Activated CD4-positive, alpha-beta T cell treated with anti-CD3 and anti-CD28 coated beads for 36 hours (primary cell): ENCODE measurements at regions of chr2 and their contacts with region 1.

Region 1: GRCh38 chr2:127591221-127591923 is 54.6 kb upstream of the GPR17 start:
- DNase-seq: peak; percentile 84
- ATAC-seq: peak; percentile 97
- H3K4me3 Mint-ChIP-seq: no peak overlapping the region
- H3K27ac Mint-ChIP-seq: no peak overlapping the region
- H3K4me1 Mint-ChIP-seq: peaks cover 1% of the 10 kb centered on the region
- H3K27me3 Mint-ChIP-seq: no peaks in the 10 kb centered on the region

Region 2: DNA sequence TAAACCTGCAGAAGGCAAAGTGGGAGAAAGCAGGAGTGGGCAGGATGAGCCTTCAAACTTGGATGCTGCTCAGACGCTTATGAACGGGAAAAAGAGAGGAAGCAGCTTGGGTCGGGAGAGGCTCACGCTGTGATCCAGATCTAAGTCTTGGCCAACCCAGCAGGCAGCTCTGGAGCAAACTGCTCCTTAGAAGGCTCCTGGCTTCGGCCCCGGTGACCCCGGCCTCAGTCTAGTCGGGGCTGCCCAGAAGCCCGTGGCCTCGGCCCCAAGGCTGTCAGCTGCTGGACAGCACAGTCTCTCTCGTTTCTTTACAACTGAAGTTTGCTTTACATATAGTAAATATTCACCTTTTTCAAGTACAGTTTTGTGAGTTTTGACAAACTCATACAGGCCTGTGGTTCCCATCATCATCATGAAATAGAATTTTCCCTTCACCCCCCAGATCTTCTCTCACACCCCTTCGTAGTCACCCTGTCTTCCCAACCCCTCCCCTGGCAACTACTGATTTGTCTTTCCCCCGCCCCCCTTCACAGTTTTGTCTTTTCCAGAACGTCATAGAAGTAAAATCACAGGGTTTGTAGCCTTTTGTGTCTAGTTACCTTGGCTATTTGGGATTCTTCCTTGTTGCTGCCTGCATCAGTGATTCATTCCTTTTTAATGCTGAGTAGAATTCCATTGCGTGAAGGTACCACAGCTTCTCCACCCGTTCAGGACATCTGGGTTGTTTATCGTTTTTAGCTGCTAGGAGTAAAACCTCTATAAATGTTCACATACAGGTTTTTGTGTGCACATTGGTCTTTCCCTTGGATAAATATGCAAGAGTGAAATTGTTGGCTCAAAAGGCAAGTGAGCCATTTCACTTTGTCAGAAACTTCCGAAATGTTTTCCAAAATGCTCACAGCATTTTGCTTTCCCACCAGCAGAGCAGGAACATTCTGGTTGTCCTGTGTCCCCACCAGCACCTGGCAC is 20.8 kb before region 1 on chr2:
- CTCF ChIA-PET with region 1: interaction called, 10 read pairs
- POLR2A ChIA-PET with region 1: no interaction called
- intact Hi-C with region 1: no loop called
- DNase-seq: no peak
- ATAC-seq: no peak
- H3K4me3 Mint-ChIP-seq: no peak overlapping the region
- H3K27ac Mint-ChIP-seq: no peak overlapping the region
- H3K4me1 Mint-ChIP-seq: peaks cover 6% of the 10 kb centered on the region
- H3K27me3 Mint-ChIP-seq: peaks cover 2% of the 10 kb centered on the region

Region 3: DNA sequence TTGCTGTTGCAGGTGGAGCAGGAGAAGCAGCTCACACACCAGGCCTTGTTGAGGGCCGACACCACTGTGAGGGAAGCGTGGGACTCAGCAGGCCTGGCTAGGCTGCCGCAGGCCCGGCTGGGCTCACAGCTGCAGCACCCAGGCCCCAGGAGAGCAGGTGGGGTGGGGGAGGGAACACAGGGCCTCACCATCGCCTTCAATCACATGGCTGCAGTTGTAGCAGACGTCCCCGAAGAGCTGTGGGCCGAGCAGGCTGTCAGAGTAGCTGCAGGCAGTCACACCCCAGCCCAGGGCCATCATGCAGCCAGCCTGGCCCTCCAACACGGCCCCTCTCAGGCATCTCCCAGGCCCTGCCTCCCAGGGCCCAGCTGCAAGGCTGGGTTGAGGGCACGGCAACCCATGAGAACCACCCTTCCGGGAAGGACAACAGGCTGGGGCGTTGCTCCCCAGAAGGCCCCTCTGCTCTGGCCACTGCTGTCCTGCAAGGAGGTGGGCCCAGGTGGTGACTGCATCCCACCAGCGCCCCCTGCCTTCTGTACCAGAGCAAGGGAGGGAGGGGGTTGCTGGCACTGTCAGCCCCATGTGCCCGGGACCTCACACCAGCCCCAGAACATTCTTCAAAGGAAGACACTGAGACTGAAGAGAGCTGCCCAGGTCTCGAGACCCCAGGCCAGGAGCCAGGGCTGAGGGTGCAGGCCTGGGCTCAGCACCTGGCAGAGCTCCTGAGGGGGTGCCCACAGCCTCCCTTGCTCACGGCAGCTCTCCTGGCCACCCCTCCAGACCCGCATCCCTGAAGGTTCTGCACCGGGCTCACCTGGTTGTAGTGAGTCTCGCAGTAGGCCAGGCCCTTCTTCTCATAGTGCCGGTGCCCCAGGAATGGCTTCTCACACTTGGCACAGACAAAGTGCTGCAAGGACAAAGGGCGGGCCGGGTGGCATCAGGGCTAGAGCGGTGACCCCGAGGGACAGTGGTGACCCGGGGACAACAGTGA is 49.0 kb after region 1 on chr2:
- CTCF ChIA-PET with region 1: interaction called, 17 read pairs
- POLR2A ChIA-PET with region 1: no interaction called
- intact Hi-C with region 1: no loop called
- DNase-seq: peak; percentile 72
- ATAC-seq: peak; percentile 47
- H3K4me3 Mint-ChIP-seq: peak overlapping the region; percentile 63
- H3K27ac Mint-ChIP-seq: peak overlapping the region; percentile 67
- H3K4me1 Mint-ChIP-seq: peaks cover 59% of the 10 kb centered on the region
- H3K27me3 Mint-ChIP-seq: no peaks in the 10 kb centered on the region

Region 4: DNA sequence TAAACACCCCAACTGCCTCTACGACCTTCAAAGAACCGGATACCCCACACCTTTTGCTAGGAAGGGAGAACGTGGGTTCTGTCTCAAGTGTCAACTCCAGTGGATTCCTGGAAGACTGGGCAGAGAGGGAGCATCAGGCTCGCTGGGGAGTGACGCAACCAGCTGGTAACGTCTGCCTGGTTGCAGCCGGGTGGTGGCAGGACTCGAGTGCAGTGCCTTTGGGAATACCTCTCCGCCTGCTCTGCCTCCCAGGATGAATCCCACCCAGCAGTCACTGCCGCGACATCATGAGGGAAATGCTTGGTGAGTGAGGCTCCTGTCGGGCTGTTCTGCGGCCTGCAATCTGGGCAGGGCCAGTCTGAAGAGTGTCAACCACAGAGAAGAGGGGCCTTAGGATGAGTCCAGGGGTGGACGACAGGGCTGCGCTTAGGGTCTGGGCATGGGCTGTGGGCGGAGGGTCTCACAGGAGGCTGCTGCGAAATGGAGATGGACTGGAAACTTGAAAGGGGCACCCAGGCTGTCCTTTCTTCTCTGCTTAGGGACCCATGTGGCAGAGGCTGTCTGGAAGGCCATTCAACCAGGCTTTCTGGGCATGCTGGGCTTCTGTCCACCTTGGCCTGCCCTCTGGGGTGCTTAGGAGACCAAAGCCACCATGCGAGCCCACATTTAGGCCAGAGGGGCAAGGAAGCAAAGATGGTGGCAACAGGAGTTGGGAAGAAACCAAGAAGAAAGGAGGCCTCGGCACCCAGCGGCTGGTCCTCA is 67.5 kb after region 1 on chr2:
- CTCF ChIA-PET with region 1: interaction called, 145 read pairs
- POLR2A ChIA-PET with region 1: no interaction called
- intact Hi-C with region 1: no loop called
- DNase-seq: no peak
- ATAC-seq: no peak
- H3K4me3 Mint-ChIP-seq: no peak overlapping the region
- H3K27ac Mint-ChIP-seq: no peak overlapping the region
- H3K4me1 Mint-ChIP-seq: no peaks in the 10 kb centered on the region
- H3K27me3 Mint-ChIP-seq: peaks cover 15% of the 10 kb centered on the region

Region 5: DNA sequence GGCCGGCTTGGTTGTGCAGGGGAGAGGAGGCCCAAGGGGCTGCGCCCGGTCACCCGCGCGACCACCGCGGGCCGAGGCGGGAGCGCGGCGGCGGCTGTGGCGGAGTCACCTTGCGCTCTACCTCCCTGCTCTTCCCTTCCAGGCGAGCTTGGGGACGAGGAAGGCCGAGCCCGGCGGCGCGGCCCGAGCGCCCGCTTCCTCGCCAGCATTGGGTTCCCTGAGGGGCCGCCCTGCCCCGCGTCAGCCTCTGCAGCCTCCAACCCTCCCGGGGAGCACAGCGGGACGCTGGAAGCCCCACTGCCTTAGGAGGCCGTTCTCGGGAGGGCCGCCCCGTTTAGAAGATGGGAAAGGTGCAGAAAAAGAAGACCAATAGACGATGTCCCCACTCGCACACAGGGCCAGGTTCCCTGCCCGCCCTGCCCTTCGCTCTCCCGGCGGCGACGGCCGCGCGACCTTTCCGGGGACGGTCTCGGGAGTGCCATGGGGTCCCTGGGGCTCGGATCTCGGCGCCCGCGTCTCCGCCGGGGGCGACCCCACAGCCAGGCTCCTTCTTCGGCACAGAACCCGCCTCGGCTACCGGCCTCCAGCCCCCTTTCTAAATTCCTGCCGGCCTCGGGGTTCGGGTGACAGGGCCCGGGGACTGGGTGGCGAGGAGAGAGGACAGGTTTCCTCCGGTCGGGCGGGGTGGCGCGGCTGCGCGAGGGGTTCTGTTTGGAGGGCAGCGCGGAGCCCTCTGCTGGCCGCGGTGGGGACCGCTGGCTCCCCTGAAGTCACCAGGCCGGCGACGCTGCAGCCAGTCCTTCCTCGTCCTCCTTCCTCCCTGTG is 641.8 kb after region 1 on chr2:
- CTCF ChIA-PET with region 1: no interaction called
- POLR2A ChIA-PET with region 1: no interaction called
- intact Hi-C with region 1: loop called in 1 of 2 experiments (anchors 5 kb)
- DNase-seq: peak; percentile 94
- ATAC-seq: peak; percentile 98
- H3K4me3 Mint-ChIP-seq: peak overlapping the region; percentile 67
- H3K27ac Mint-ChIP-seq: no peak overlapping the region
- H3K4me1 Mint-ChIP-seq: peaks cover 2% of the 10 kb centered on the region
- H3K27me3 Mint-ChIP-seq: peaks cover 3% of the 10 kb centered on the region